AG04450 (cell line): ENCODE measurements at regions of chr19 and their contacts with region 1.

Region 1: DNA sequence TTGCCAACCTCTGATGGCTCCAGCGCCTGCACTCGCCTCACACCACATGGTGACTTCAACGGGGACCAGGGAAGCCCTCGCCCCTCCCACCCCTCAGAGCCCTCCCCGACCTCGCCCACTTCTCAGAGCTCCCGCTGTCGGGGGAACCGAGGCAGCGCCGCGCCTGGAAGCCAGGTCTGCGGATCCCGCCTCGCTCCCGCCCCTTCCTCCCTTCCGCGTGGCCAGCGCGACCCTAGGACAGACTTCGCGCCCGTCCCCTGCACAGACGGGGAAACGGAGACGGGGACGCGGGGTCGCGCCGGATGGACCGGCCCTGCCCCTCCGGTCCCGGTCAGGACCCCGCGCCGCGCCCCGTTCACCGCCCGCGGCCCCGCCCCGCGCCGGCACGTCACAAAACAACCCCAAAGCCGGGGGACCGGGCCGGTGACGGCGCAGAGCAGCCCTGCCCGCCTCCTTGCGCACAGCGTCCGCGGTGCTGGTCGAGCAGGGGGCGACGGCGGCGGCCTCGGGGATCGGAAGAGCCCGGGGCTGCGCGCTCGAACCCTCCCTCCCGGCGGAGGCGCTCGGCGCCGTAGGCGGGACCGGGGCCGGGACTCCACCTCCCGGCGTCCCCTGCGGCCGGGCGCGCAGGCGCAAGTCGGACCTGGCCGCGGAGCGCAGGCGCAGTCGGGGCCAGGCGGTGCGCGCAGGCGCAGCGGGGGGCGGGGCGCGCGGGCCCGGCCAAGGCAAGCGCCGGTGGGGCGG is 379 bp upstream of the CDC34 start:
- DNase-seq: peak; percentile 47
- H3K4me3 ChIP-seq: peak overlapping the region; percentile 82
- H3K27ac ChIP-seq: peak overlapping the region; percentile 57
- H3K27me3 ChIP-seq: peaks cover 3% of the 10 kb centered on the region
- CTCF ChIP-seq: no peak

Region 2: DNA sequence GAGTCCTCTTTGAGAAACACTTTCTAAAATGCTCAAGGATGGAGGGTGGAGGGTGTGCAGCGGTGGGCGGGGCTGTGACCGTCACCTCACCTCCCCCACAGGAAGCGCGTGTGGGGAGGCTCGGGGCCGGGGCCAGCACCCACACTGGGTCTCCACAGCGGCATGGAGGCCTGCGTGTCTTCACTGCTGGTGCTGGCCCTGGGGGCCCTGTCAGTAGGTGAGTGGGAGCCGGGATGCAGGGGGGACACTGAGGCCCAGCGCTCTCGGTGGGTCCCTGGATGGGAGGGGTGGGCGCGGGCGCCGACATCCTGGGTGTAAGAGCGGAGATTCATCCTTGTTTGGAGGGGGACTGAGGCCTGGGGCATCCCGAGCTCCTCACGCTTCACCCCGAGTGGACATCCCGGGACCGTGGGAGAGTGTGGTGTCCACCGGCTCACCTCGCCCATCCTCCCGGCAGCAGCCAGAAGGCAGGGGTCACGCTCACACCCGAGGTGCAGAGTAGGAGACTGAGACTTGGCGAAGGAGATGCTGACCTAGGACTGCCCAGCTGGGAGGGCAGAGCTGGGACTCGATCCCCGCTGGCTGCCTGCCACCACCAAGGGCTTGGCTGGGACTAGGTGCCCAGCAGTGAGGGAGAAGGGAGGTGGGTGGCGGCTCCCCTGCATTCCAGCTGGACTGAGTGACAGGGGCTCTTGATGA is 12.9 kb after region 1 on chr19 and contains the start of gene GZMM:
- CTCF ChIA-PET with region 1: no interaction called
- POLR2A ChIA-PET with region 1: interaction called, 10 read pairs
- DNase-seq: no peak
- H3K4me3 ChIP-seq: no peak within 1 kb of the TSS
- H3K27ac ChIP-seq: no peak within 1 kb of the TSS
- H3K27me3 ChIP-seq: no peaks in the 10 kb centered on the region
- CTCF ChIP-seq: no peak
- polyA plus RNA-seq, gene GZMM: not detected in 2 replicates